Heart left ventricle (tissue), 16 donors: ENCODE measurements at regions of chr17 and their contacts with region 1.

Region 1: DNA sequence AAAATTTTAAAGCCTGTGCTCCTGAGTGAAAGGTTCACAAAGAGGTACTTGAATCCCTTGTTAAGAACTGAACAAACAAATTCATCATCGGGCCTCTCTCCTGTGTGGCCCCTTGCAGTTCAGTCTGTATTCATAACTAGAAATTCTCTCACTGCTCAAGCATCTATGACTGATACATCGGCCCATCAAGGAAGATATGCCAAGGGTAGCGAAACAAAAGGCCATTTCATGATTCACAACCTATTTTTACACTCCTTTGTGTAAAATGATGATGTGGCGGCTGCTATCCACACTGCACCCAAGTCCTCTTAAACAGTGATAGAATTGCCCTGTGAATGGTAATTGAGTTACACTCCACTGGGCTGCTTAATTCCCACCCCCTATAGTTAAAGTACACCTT is 204.6 kb downstream of the STX8 start:
- DNase-seq: peak in 1 of 5 donors; percentile 17
- ATAC-seq: peak; percentile 69 to 86 (median 83)
- H3K4me3 ChIP-seq: peak overlapping the region in 1 of 12 donors; percentile 11
- H3K27ac ChIP-seq: peak overlapping the region in 11 of 12 donors; percentile 5 to 87 (median 70)
- H3K4me1 ChIP-seq: peaks cover 0 to 45% (median 28%) of the 10 kb centered on the region in 12 donors
- H3K27me3 ChIP-seq: no peaks in the 10 kb centered on the region
- CTCF ChIP-seq: no peak
- POLR2A ChIP-seq: no peak

Region 2: DNA sequence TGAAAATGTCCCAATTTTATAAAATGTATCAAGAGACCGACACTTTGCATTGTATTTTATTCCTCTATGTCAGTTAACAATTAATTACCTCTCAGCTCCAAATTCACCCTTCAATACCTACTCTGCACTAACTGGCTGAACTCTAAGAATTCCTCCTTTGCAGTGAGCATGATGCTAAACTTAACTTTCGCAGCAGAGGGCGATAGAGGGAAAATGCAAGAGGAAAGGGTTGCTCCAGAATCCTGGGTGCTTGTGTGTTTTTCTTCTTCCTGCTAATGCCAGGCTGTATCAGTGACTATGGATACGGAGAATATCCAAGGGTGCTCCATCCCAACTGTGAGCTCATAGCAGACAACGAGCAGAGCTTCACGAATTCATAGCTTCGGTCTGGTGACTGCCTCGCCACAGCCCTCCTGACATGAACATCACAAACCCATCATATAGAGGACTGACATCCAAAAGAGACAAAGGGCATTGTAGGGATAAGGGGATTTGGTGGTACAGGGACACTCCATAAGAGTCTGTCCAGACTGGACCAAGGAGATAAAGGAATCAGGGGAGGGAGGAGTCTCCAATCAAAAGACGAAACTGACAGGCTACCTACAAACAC is 31.7 kb after region 1 on chr17:
- intact Hi-C with region 1: loop called in 1 of 10 experiments (anchors 2 kb)
- DNase-seq: no peak
- ATAC-seq: no peak
- H3K4me3 ChIP-seq: no peak overlapping the region
- H3K27ac ChIP-seq: no peak overlapping the region
- H3K4me1 ChIP-seq: peaks cover 0 to 7% (median 0%) of the 10 kb centered on the region in 12 donors
- H3K27me3 ChIP-seq: no peaks in the 10 kb centered on the region
- CTCF ChIP-seq: peak in 7 of 12 donors; percentile 13 to 39 (median 35)
- POLR2A ChIP-seq: no peak

Region 3: DNA sequence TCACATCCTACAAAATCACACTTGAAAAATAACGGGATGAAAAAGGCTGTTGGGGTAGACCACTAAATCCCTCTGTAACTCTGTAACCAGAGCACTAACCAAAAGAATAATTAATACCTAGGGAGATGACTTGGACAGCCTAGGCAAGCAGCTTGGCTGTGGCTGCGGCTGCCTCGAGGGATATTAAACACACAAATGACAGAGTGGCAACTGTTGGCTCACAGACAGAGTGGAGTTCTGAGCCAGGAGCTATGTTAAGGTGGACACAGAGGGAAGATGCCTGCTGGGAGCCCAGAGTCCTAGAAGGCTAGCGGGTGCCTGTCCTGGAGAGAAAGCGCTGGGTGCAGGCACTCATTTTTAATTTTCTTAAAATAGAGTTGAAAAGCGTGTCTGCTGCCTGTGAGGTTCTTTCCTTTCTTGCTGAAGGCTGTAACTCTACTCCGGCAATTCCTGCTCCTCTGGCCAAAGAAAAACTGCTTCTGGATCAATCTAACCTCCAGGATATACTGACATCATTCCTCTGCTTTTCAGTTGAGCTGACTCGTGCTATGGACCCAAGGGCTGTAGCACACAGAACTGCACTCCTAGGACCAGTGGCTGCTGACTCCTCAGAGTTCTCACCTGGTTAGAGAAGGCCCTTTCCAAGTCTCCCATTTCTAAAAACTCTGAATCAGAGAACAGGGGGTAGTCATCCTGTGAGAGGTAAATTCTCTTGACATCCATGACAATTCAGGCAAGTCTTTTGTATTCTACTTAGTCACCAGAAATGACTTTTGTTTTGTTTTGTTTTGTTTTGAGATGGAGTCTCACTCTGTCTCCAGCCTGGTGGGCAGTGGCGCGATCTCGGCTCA is 56.7 kb after region 1 on chr17:
- intact Hi-C with region 1: loop called in 1 of 10 experiments (anchors 10 kb)
- DNase-seq: peak in 4 of 5 donors; percentile 20 to 59 (median 35)
- ATAC-seq: peak; percentile 39 to 88 (median 80)
- H3K4me3 ChIP-seq: no peak overlapping the region
- H3K27ac ChIP-seq: peak overlapping the region in 3 of 12 donors; percentile 6 to 37 (median 30)
- H3K4me1 ChIP-seq: peaks cover 0 to 24% (median 11%) of the 10 kb centered on the region in 12 donors
- H3K27me3 ChIP-seq: no peaks in the 10 kb centered on the region
- CTCF ChIP-seq: no peak
- POLR2A ChIP-seq: no peak